Caki2 (cell line): ENCODE measurements at regions of chr16 and their contacts with region 1.

Region 1: DNA sequence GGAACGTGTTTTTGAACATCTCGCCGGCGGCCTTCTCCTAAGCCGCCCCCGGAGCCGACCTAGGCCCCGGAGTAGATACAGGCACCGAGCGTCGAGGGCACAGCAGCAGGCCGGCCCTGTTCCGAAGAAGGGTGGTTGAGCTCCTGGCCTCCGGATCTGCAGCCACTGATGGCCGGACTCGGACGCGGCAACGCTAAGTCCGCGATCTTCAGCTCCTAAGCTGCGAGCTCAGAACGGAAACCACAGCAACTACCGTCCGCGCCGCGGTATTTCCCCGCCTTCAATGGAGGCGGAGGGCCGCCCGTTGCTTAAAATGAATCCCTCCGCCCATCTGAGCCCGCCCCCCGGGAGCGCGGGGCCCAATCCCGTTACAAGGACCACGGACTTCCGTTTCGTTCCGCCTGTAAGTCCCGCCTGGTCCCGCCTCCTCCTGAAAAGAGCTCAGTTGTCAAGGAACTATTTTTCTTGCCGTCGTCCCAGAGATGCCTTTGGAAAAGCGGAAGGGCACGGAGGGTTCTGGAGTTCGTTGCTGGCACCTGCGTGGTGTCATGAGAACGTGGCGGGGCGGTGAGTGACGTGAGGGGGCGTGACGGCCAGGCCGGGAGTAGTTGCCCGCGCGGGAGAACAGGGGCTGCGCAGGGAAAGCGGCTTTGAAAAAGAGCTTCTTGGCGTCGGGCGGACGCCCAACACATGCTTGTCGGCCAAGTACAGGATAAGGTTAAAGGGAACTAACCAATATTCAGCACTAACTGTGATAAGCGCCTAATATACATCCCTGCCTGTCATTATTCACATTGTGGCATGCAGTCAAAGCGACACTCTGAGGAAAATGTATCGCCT is at the start of gene CFAP20:
- DNase-seq: peak; percentile 99
- total RNA-seq, gene CFAP20: 160 and 172 TPM in 2 replicates

Region 2: DNA sequence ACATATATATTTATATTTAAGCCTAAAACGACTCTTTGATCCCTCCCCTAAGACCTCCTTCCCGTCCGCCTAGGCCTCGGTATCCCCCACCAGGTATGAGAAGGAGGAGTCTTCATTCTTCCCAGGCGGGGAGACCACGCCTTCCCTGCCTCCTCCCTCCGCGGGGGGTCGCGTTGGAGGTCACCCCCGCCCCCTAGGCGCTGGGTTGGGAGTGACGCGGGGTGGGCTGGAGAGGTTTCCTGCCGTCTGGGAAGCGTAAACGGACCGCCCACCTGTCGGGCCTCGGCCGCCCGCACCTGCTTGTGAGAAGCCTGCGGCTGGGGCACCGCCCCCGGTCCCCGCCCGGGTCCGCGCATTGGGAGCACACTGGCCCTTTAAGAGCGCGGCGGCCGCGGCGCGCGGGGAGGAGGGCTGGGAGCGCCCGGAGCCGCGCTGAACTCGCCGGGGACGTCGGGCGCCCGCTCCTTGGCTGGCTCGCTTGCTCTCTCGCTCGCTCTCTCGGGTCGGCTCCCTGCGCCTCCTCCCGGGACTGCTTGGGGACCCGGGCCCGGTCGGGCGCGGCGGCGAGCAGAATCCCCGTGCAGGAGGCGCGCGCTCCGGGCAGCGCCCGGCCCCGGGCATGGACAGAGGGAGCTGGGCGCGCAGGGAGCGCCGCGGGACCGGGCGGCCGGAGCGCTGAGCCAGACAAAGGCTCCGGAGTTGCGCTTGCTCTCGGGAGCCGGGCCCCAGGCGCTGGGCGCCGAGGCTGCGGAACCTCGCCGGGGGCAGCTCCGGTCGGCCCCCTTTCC is 103.8 kb before region 1 on chr16 and contains the start of gene MMP15:
- in situ Hi-C with region 1: loop called (anchors 10 kb)
- DNase-seq: peak; percentile 83
- total RNA-seq, gene MMP15: 11.7 and 12.3 TPM in 2 replicates

Region 3: DNA sequence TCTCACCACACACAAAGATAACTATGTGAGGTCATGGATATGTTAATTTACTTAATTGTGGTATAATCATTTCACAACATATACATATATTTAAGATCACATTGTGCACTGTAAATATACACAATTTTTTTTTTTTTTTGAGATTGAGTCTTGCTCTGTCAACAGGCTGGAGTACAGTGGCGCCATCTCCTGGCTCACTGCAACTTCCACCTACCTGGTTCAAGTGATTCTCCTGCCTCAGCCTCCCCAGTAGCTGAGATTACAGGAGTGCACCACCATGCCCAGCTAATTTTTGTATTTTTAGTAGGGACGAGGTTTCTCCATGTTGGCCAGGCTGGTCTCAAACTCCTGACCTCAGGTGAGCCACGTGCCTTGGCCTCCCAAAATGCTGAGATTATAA is 177.0 kb after region 1 on chr16:
- in situ Hi-C with region 1: no loop called
- DNase-seq: no peak